ENCODE measurements at regions of chr1 and their contacts with region 1.

Region 1: DNA sequence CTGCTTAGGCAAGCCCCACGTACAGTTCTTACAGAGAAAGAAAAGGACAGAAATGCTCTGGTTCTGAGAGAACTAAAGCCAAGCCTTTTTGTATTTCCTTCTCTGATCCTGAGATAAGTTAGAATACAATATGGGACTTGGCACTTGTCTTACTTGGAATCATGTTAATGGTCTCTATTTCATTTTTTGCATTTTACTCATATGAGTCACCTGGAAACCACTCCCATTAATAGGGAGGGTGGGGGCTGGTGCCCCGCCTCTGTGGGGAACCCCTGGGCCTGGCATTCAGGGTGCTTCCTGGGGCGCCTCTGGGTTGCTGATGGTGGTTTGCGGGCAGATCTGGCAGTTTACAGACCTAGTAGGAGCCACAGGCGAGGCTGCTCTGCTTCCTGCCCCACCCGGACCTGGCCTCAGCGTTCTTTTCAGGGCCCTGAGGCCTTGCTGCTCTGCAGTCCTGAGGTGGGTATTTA is 26.7 kb downstream of the TSPAN2 start:
- DNase-seq: peak; percentile 97
- H3K4me3 Mint-ChIP-seq: peak overlapping the region; percentile 45
- H3K27ac Mint-ChIP-seq: peak overlapping the region; percentile 96
- H3K4me1 Mint-ChIP-seq: peaks cover 44% of the 10 kb centered on the region
- H3K27me3 Mint-ChIP-seq: no peaks in the 10 kb centered on the region

Region 2: GRCh38 chr1:115098979-115099692 is 36.6 kb after region 1 on chr1:
- CTCF ChIA-PET with region 1: interaction called, 3 read pairs
- POLR2A ChIA-PET with region 1: interaction called, 13 read pairs
- DNase-seq: peak; percentile 79
- H3K4me3 Mint-ChIP-seq: peak overlapping the region; percentile 82
- H3K27ac Mint-ChIP-seq: peak overlapping the region; percentile 98
- H3K4me1 Mint-ChIP-seq: peaks cover 33% of the 10 kb centered on the region
- H3K27me3 Mint-ChIP-seq: peaks cover 10% of the 10 kb centered on the region